Astrocyte of the cerebellum (primary cell): ENCODE measurements at regions of chr12 and their contacts with region 1.

Region 1: GRCh38 chr12:67648521-67649260 is at the start of gene DYRK2:
- DNase-seq: no peak
- H3K4me3 ChIP-seq: peak within 1 kb of the TSS; percentile 71
- CTCF ChIP-seq: no peak

Region 2: GRCh38 chr12:67457778-67458177 is 190.9 kb before region 1 on chr12:
- in situ Hi-C with region 1: loop called (anchors 25 kb)
- DNase-seq: no peak
- H3K4me3 ChIP-seq: no peak overlapping the region
- CTCF ChIP-seq: peak; percentile 30

Region 3: DNA sequence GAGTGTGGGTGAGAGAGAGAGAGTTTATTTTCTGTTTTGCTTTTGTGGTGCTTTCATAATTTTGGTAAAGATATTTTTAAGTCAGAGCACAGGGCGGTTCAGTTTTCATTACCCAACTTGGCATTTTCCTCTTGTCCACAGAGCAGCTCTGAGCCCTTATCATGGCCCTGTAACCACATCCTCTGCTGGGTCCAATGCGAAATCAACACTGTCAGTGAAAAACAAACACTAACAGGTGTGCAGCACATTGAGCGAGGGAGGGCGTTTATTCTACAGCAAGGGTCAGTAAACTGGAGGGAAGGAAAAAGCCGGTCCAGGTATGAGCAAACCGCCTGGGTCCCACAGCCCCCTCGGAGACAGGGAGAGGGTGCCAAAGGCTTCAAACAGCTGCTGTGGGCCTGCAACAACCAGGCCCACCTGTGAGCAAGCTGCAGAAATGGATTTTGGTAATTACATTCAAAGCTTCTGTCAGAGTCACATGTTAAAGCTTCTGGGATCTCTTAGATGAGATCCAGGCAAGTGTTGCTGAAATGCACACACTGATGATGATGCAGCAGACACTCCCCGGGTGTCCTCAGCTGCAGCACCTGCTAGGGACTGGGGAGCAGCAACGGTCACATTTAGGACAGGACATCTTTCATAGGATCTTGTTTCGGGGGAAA is 132.9 kb before region 1 on chr12:
- in situ Hi-C with region 1: no loop called
- DNase-seq: no peak
- H3K4me3 ChIP-seq: no peak overlapping the region
- CTCF ChIP-seq: no peak

Region 4: DNA sequence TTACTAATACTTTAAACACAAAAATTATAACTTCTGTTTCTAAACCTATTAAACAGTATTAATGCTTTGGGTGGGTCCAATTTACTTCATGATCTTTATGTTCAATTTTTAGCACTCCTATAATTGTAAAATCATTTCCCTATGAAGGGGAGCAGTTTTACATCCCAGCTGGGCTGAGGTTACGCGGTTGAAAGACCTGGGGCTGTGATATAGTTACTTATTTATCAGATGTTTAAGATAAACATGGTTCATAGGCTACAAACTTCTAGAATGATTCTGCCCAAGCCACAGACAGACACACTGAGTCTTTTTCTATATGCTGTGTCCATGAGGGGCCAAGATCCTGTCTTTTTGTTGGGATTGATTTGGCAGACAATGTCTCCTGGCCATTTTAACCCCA is 44.3 kb after region 1 on chr12:
- in situ Hi-C with region 1: no loop called
- DNase-seq: no peak
- H3K4me3 ChIP-seq: no peak overlapping the region
- CTCF ChIP-seq: no peak

Region 5: DNA sequence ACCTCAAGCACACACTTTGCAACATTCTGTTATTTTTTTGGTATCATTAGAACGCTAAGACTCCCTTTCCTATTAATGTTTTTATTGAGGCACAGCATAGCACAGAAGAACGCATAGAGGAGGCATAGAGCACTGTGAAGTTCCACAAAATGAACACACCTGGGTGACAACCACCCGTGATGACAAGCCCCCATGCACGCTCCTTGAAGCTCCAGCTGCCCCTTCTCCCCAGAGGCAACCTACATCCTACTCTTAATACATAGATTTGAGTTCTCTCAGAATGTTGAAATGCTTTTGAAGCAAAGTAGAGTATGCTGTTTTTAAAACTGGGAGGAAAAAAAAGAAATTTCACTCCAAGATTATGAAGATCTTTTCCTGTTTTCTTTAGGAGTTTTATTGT is 55.4 kb after region 1 on chr12:
- in situ Hi-C with region 1: no loop called
- DNase-seq: no peak
- H3K4me3 ChIP-seq: no peak overlapping the region
- CTCF ChIP-seq: no peak